ENCODE measurements at regions of chr20 and their contacts with region 1.

Region 1: GRCh38 chr20:57398231-57398821 is 7.1 kb downstream of the RBM38 start:
- DNase-seq: peak; percentile 83
- ATAC-seq: peak; percentile 65
- H3K4me3 ChIP-seq: peak overlapping the region; percentile 72
- H3K27ac ChIP-seq: peak overlapping the region; percentile 97
- H3K4me1 ChIP-seq: peaks cover 69% of the 10 kb centered on the region
- H3K27me3 ChIP-seq: no peaks in the 10 kb centered on the region
- CTCF ChIP-seq: no peak
- EP300 ChIP-seq: peak; percentile 90 to 93
- POLR2A ChIP-seq: peak; percentile 42; the same call in 1 of the 2 replicates
- RAD21 ChIP-seq: peak; percentile 10; the same call in 1 of the 2 replicates

Region 2: GRCh38 chr20:57383447-57384347 is 14.6 kb before region 1 on chr20:
- CTCF ChIA-PET with region 1: interaction called, 27 read pairs
- POLR2A ChIA-PET with region 1: interaction called, 58 read pairs
- RAD21 ChIA-PET with region 1: interaction called, 37 read pairs
- SMC1A ChIA-PET with region 1: interaction called, 27 read pairs
- in situ Hi-C with region 1: no loop called
- intact Hi-C with region 1: no loop called
- DNase-seq: no peak
- ATAC-seq: no peak
- H3K4me3 ChIP-seq: no peak overlapping the region
- H3K27ac ChIP-seq: no peak overlapping the region
- H3K4me1 ChIP-seq: peaks cover 7% of the 10 kb centered on the region
- H3K27me3 ChIP-seq: no peaks in the 10 kb centered on the region
- CTCF ChIP-seq: no peak
- EP300 ChIP-seq: no peak
- POLR2A ChIP-seq: no peak
- RAD21 ChIP-seq: no peak

Region 3: GRCh38 chr20:57432874-57433491 is 34.7 kb after region 1 on chr20:
- CTCF ChIA-PET with region 1: interaction called, 15 read pairs
- POLR2A ChIA-PET with region 1: interaction called, 17 read pairs
- RAD21 ChIA-PET with region 1: interaction called, 7 read pairs
- SMC1A ChIA-PET with region 1: interaction called, 8 read pairs
- in situ Hi-C with region 1: no loop called
- intact Hi-C with region 1: loop called (anchors 2 kb)
- DNase-seq: peak; percentile 76
- ATAC-seq: peak; percentile 94
- H3K4me3 ChIP-seq: 0 out of 2 replicates have a peak overlapping the region, but pooled peaks have one; percentile 26
- H3K27ac ChIP-seq: peak overlapping the region; percentile 57
- H3K4me1 ChIP-seq: peaks cover 39% of the 10 kb centered on the region
- H3K27me3 ChIP-seq: no peaks in the 10 kb centered on the region
- CTCF ChIP-seq: no peak
- EP300 ChIP-seq: peak; percentile 41 to 56; a peak in 2 of 4 replicates
- POLR2A ChIP-seq: no peak
- RAD21 ChIP-seq: no peak

Region 4: DNA sequence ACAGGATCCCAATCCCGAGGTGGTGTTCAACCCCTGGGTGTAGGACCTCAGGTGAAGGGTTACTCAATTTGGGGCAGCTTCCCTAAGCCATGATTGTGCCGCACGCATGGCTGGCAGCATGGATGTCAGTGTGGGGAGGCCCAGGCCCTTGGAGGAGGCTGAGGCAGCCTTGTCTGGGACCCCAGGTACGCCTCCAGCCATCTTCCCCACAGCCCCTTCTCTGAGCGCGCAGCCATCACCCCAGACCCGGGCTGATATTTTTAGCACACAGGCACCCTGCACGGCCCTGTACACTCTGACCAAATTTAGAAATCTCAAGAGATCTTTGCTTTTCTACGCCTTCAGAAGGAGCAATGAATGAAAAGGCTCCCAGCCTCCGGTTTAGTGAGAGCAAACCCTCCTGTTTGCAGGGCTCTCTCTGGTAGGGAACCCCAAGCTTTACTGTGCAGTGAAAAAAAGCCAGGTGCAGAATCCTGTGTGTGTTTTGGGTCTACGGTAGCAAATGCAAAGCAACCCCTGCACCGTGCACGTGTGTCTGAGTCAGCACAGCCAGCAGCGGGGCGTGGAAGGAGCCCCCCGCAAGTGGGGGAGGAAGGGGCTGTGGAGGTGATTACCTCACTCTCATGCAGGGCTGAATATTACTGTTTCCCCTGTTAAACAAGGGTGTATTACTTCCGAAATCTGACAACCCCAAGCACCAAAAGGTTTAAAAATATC is 82.3 kb after region 1 on chr20:
- CTCF ChIA-PET with region 1: interaction called, 28 read pairs
- POLR2A ChIA-PET with region 1: interaction called, 35 read pairs
- RAD21 ChIA-PET with region 1: interaction called, 52 read pairs
- SMC1A ChIA-PET with region 1: interaction called, 29 read pairs
- in situ Hi-C with region 1: loop called (anchors 5 kb)
- intact Hi-C with region 1: loop called (anchors 1 kb)
- DNase-seq: peak; percentile 83
- ATAC-seq: peak; percentile 59
- H3K4me3 ChIP-seq: peak overlapping the region; percentile 45
- H3K27ac ChIP-seq: peak overlapping the region; percentile 93
- H3K4me1 ChIP-seq: peaks cover 59% of the 10 kb centered on the region
- H3K27me3 ChIP-seq: no peaks in the 10 kb centered on the region
- CTCF ChIP-seq: no peak
- EP300 ChIP-seq: peak; percentile 69 to 74; a peak in 2 of 4 replicates
- POLR2A ChIP-seq: no peak; the same call in 1 of the 2 replicates
- RAD21 ChIP-seq: peak; percentile 1; the same call in 1 of the 2 replicates

Region 5: GRCh38 chr20:57498425-57499400 is 100.4 kb after region 1 on chr20:
- CTCF ChIA-PET with region 1: interaction called, 26 read pairs
- POLR2A ChIA-PET with region 1: interaction called, 12 read pairs
- RAD21 ChIA-PET with region 1: interaction called, 8 read pairs
- SMC1A ChIA-PET with region 1: interaction called, 25 read pairs
- in situ Hi-C with region 1: no loop called
- intact Hi-C with region 1: loop called (anchors 1 kb)
- DNase-seq: no peak
- ATAC-seq: peak; percentile 93
- H3K4me3 ChIP-seq: no peak overlapping the region
- H3K27ac ChIP-seq: no peak overlapping the region
- H3K4me1 ChIP-seq: peaks cover 21% of the 10 kb centered on the region
- H3K27me3 ChIP-seq: peaks cover 0 to 2% of the 10 kb centered on the region in 2 experiments; a peak in 1 of 4 replicates
- CTCF ChIP-seq: peak; percentile 54 to 74 (median 70)
- EP300 ChIP-seq: no peak
- POLR2A ChIP-seq: no peak
- RAD21 ChIP-seq: peak; percentile 60

Measured in GM12878 (cell line).